Left cardiac atrium (tissue), 4 donors: ENCODE measurements at regions of chr11 and their contacts with region 1.

Region 1: GRCh38 chr11:132028380-132029240 is 658.2 kb downstream of the NTM start:
- DNase-seq: peak; percentile 53
- ATAC-seq: peak; percentile 44 to 46

Region 2: DNA sequence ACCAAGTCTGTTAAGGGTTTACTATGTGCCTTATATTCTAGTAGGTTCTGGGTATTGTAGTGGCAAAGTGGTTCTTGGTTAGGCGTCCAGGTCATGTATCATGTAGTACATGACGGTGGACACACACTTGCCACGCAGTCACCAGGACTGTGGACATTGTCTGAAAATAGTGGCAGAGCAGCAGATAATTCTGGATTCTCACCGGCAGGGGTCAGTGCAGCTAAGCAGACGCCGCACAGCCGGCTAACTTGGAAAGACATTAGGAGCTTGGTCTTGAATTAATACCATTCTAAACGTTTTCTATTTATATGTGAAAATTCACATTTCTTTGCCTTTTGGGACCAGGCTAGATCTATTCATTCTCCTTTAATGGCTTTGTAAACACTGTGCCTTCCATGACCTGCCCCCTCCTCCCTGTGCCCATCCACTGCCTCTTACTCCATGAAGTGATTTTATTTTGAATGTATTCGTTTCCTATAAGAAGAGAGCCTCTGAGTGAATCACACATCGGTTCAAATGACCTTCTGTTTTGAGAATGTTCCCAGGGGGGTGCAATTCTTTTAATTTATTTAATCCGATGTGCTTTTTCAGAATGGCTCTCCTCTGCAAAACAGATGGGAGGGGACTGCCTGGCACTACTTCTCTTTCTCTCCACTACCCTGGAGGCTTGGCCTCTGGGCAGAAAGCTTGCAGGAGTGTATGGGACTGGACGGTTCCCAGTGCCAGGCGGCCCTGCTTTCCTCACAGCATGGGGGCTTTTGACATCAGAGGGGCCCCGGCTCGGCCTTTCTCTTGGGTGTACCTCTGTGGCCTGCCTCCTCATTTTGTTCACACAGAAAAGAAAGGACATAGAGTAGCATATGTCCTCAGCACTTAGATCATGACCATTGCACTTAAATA is 280.2 kb before region 1 on chr11:
- intact Hi-C with region 1: loop called in 1 of 2 experiments (anchors 10 kb)
- DNase-seq: peak; percentile 59
- ATAC-seq: peak; percentile 78 to 88

Region 3: DNA sequence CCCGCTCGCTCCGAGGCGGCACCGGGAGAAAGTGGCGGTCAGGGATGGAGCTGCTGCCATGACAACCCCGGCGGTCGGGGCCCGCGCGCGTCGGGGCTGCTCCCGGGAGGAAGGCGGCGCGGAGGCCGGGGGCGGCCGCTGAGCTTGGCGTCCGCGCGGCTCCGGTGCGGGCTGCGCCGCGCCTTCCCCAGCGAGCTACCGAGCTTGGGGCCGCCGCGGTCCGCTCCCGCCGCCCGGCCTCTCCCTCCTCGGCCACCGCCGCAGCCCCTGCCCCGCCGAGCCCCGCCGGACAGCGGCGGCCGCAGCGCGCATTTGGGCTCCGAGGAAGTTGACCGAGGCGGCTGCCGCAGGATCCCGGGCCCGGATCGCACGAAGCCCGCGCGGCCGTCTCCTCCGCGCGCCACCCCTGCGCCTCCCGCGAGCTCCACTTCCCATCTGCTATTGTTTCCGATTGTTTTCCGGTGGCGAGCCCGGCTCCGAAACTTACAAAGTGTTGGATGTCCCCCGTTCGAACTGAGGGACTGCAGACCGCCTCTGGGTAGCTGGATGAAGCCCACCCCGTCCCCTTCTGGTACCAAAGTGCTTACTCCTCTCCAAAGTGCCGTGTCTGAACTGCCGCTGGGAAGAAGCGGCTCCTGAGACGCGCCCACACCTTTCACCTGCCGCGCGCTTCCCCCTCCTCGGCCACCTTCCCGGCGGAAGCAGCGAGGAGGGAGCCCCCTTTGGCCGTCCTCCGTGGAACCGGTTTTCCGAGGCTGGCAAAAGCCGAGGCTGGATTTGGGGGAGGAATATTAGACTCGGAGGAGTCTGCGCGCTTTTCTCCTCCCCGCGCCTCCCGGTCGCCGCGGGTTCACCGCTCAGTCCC is 117.9 kb before region 1 on chr11:
- intact Hi-C with region 1: loop called (anchors 2 to 5 kb)
- DNase-seq: no peak
- ATAC-seq: peak; percentile 45 to 62

Region 4: DNA sequence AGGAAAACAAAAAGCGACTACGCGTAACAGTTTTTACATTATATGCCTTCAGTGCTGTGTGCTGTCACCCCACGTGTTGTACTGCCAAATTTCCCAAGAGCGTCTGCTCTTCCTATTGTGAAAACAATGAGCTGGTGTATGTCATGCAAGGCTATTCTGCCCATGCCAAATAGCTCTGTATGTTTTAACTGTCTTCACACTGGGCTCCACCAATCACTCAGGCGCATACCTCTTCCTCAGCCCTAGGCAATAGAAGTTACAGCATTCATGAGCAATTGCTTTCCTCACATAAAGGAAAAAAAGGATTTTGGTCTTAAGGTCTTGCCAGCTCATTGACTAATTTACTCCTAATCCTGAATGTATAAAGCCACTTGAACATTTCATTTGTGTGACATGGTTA is 51.4 kb before region 1 on chr11:
- intact Hi-C with region 1: loop called in 1 of 2 experiments (anchors 5 kb)
- DNase-seq: no peak
- ATAC-seq: no peak

Region 5: DNA sequence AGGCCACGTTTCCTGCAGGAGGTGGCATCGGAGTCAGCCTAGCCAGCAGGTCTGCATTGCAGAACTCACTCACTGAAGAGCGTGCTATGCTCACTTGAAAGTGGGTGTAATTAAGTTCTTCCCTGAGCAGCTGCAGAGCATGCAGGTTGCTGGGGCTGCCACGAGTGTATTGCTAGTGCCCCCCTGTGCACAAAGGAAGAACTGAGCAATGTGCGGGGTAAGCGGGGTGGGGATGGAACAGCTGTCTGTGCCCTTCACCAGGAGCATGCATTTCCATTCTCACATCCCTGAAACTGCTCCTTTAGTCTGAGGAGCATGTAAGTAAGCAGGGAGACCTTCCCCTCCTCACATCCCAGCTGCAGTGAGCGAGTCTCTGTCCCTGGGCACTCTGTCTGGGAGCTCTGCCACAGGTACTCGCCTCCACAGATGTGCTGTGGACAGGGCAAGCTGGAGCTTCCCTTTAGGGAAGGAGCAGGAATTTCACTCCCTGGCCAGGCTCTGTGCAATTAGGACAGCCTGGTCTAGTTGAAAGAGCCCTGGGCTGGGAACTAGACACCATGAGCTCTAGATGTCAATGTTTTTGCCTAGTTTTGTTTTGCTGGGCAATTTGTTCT is 373.6 kb after region 1 on chr11:
- intact Hi-C with region 1: no loop called
- DNase-seq: no peak
- ATAC-seq: peak; percentile 78 to 90